BJ (cell line): ENCODE measurements at regions of chr14 and their contacts with region 1.

Region 1: DNA sequence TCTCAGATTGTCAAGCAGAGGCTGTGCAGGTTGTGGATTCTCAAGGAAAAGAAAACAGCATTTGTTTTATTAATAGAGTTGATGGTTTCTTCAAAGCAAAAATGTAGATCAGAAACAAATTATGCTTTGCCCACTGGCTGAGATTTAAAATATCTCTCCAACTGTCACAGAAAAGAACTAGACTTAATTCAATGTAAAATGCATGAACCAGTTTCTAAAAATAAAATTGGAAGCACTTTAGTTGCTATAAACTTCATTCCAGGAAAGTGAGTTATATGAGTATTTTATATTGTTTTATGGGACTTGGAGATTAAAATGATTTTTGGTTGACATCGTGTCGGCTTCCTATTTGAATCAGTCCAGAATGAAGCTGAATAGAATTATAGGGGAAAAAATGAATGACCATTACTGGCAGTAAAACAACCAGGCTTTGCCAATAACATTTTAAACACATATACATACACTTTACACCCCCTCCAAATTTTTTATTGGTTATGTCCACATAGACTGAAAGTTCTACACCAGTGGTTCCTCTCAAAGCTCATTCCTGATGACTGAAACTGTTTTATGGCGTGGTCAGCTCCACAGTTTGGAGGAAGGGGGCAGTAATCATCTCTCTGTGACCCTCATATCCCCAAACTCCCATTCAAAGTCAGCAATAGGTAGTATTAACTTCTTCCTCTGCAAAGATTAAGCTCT is 55.5 kb upstream of the DAAM1 start:
- DNase-seq: no peak
- H3K4me3 ChIP-seq: no peak overlapping the region
- H3K27me3 ChIP-seq: 0 out of 2 replicates have a peak, but pooled peaks cover 2% of the 10 kb centered on the region
- CTCF ChIP-seq: no peak

Region 2: GRCh38 chr14:59199205-59199604 is 66.3 kb after region 1 on chr14:
- CTCF ChIA-PET with region 1: no interaction called
- POLR2A ChIA-PET with region 1: no interaction called
- DNase-seq: no peak
- H3K4me3 ChIP-seq: no peak overlapping the region
- H3K27me3 ChIP-seq: no peaks in the 10 kb centered on the region
- CTCF ChIP-seq: no peak

Region 3: DNA sequence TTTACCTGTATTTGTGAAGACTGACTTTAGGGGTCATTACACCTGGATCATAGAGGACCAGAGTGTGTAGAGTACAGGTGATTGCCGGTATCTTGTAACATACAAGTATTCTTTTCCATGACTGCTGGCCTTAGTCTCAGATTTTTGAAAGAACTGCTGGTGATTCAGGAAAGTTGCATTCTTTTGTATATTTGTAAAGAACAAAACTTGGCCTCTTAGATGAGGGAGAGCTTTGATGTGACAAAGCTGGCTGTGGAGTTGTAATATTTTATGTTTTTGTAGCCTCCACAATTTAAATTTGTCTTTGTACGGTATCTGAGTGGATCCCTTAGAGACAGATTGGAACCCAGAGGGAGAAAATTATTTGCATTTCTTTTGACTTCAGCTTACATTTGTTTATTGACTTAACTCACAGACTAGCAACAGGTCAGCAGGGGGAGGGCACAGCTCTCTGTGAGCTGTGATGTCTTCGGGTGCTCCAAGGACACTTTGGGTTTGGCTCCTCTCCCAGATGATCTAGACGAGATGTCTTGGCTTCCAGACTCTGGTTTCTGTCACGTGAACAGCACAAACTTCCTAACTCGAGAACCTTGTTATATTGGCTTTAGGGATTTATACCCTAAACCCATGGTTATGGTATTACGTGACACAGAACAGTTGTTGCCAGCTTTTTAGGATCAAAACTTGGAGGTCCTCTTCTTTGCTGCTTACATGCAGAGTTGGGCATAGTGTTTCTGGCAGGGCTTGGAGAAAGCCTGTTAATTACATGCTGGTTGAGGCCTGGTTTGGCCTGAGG is 121.4 kb after region 1 on chr14:
- CTCF ChIA-PET with region 1: no interaction called
- POLR2A ChIA-PET with region 1: interaction called, 18 read pairs
- DNase-seq: peak; percentile 80
- H3K4me3 ChIP-seq: no peak overlapping the region
- H3K27me3 ChIP-seq: no peaks in the 10 kb centered on the region
- CTCF ChIP-seq: no peak